Right ventricle myocardium superior (tissue), 1 donor: ENCODE measurements at regions of chr1 and their contacts with region 1.

Region 1: DNA sequence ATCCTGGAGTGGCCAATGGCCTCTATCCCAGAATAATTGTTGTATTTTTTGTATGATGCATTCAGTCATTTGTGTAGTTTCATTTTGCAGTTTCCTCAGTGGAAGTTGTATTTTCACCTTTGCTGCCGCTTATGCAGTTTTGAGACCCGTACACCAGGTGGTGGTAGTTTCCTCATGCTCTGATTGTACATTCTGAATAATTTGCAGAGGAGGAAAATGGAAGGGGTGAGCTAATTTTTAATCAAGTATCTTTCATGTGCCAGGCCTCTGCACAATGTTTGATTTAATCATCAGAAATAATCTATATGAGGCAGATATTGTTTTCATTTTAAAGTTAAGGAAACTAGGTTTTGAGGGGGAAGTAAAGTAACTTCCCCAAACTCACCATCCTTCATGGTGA is 29.5 kb downstream of the HLX start:
- DNase-seq: no peak
- ATAC-seq: peak; percentile 58

Region 2: DNA sequence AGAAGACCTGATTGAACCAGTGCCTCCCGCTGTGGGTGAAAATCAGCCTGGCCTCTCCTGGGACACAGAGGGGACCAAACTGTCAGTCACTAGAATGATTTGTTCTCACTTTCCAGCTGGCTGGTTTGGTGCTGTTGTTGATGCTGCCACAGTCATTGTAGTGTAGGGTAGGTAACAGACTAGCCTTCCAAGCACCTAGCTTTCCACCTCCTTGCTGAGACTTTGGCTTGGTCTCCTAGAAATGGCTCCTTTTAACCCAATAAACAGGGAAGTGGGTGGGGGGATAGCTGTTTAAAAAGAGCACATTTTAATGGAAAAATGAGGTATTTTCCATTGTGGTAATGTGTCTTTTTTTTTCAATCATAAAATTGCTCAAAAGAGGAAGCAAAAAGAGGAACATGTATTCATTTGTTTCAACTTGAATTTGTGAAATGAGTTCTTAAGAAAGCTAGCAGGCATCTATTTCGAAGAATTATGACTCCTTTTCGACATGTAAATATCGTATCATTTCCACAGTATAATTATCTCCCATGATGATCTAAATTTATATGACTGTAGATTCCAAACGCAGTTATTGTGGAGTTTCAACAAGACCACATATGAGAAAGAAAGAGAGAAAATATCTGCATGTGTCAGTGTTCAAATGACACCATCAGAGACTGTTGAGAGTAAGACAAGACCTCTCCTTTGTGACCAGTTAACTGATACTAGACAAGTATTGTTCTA is 160.6 kb after region 1 on chr1:
- intact Hi-C with region 1: no loop called
- DNase-seq: no peak
- ATAC-seq: no peak

Region 3: GRCh38 chr1:221174330-221174999 is 265.7 kb after region 1 on chr1:
- intact Hi-C with region 1: loop called (anchors 10 kb)
- DNase-seq: peak; percentile 88
- ATAC-seq: peak; percentile 99